ENCODE measurements at regions of chr1 and their contacts with region 1.

Region 1: GRCh38 chr1:172761581-172762025 is 102.7 kb downstream of the FASLG start:
- DNase-seq: peak; percentile 54
- H3K4me3 ChIP-seq: no peak overlapping the region
- CTCF ChIP-seq: no peak

Region 2: DNA sequence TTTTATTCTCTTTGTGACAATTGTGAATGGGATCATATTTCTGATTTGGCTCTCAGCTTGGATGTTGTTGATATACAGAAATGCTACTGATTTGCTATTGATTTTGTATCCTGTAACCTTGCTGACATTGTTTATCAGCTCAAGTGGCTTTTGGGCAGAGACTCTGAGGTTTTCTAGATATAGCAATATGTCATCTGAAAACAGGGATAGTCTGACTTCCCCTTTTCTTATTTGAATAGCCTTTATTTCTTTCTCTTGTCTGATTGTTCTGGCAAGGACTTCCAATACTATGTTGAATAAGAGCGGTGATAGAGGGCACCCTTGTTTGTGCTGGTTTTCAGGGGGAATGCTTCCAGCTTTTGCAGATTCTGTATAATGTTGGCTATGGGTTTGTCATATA is 48.1 kb after region 1 on chr1:
- in situ Hi-C with region 1: no loop called
- DNase-seq: no peak
- H3K4me3 ChIP-seq: no peak overlapping the region
- CTCF ChIP-seq: no peak

Region 3: DNA sequence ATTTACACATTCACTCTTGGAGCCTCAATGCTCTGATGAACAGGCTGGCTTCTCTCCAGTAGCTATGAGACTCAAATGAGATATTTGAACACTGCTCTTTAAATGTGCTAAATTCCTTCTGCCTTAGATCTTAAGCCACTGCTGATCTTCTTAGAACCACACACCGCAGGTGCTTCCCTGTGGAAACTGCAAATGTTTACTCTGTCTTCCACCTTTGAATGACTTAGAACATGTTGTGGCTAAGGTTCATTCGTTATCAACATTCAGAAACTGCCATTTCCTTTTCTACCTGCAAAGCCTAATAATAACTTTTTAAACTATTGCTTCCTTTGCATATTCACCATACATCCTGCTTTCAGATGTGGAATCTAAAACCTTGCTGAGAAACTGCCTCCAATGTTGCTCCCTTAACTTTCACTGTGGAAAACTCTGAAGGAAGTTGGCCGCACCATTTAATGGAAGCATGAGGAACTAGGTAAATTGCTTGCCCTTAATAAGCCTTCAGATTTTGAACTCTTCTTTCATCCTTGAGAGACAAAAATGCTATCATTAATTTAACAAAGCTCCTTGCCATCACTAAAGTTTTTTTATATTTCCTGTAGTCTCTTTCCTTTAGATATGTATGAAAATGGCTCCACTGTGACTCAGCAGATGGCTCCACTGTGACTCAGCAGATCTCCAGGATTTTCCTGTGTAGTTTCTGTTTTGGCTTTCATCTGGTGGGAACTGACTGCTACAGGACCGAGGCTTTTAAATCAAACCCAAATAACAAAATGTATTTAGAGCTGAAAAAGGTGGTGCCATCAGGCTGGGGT is 145.4 kb after region 1 on chr1:
- in situ Hi-C with region 1: no loop called
- DNase-seq: peak; percentile 75
- H3K4me3 ChIP-seq: no peak overlapping the region
- CTCF ChIP-seq: no peak

Region 4: DNA sequence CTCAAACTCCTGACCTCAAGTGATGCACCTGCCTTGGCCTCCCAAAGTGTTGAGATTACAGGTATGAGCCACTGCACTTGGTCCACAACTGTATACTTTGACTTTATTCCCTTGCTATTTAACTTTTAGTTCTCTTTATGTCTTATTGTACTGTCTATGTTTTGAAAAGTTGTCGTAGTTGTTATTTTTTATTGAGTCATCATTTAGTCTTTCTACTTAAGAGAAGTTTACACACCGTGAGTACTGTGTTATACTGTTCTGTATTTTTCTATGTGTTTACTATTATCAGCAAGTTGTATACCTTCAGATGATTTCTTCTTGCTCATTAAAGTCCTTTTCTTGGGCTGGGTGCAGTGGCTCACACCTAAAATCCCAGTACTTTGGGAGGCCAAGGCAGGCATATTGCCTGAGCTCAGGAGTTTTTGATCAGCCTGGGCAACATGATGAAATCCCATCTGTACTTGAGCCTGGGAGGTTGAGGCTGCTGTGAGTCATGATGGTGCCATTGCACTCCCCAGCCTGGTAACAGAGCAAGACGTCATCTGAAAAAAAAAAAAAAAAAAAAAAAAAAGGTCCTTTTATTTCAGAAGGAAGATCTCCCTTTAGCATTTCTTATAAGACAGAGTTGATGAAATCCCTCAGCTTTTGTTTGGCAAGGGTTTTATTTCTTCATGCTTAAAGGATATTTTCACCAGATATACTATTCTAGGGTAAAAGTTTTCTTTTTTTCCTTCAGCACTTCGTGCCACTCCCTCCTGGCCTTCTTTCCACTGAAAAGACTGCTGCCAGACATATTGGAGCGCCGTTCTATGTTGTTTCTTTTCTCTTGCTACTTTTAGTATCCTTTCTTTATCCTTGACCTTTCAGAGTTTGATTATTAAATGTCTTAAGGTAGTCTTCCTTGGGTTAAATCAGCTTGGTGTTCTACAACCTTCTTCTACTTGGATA is 241.6 kb after region 1 on chr1:
- in situ Hi-C with region 1: no loop called
- DNase-seq: no peak
- H3K4me3 ChIP-seq: no peak overlapping the region
- CTCF ChIP-seq: no peak

Region 5: DNA sequence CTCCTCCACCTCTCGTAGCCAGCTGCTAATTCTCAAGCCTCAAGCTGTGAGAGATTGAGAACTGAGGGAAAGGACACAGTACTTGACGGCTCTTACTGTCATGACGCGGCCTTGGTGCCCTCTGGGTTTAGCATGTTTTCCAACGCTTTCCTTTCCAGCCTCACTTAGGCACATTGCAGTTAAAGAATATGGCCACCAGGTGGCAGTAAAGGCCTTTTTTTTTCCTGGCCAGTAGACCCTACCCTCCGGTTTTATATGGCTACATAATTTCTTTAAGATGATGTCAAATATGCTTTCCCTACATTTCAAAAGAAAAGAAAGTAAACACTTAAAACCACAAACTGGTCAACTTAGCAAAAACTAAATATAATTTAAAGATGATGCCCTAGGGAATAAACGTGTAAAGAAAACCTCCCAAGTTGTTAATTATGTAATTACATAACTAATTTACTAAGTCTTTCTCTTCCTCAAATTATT is 658.8 kb after region 1 on chr1:
- in situ Hi-C with region 1: loop called (anchors 25 kb)
- DNase-seq: peak; percentile 70
- H3K4me3 ChIP-seq: no peak overlapping the region
- CTCF ChIP-seq: peak; percentile 73